ENCODE measurements at regions of chr9 and their contacts with region 1.

Region 1: DNA sequence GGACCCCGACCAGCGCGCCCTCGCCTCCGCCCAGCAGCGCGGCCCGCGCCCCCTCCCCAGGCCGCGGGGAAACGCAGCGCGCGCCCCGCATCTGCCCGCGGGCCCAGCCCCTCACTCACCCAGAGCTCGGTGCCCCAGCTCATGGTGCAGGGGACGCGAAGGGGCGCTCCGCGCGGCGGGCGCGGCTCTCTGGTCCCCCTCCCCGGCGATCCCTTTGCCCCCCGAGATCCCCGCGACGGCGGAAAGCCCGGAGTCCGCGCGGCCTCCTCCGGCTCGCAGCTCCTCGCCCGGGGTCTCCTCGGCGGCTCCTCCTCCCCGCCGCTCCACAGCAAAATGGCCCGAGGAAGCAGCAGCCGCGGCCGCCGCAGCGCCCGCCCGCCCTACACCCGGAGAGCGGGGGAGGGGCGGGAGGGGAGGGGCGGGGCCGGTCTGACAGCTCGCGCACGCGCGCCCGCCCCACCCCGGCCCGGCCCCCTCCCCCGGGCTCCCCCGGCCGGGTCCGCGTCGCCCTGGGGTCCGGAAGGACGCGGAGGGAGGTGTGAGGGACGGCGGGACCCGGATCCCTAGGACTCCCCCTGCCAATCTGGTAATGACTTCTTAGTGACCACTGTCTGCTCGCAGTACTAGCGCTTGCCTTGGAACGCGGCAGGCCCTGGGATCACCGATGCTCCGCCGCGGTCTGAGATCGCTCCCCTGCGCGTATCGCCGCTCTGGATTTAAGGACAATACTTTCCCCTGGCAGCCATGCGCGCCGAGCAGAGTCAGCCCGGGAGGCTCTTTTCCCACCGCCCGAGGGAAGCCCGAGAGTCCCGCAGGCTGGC is at the start of gene FNBP1:
- DNase-seq: peak; percentile 84
- H3K4me3 ChIP-seq: peak within 1 kb of the TSS; percentile 72 to 99 (median 88)
- H3K27ac ChIP-seq: peak within 1 kb of the TSS; percentile 92 to 100 (median 97)
- H3K4me1 ChIP-seq: peaks cover 17 to 52% (median 29%) of the 10 kb centered on the region in 4 donors
- H3K27me3 ChIP-seq: no peaks in the 10 kb centered on the region
- CTCF ChIP-seq: no peak
- EP300 ChIP-seq: no peak
- POLR2A ChIP-seq: peak; percentile 87
- total RNA-seq, gene FNBP1: 38.5 to 114 (median 62.9) TPM

Region 2: DNA sequence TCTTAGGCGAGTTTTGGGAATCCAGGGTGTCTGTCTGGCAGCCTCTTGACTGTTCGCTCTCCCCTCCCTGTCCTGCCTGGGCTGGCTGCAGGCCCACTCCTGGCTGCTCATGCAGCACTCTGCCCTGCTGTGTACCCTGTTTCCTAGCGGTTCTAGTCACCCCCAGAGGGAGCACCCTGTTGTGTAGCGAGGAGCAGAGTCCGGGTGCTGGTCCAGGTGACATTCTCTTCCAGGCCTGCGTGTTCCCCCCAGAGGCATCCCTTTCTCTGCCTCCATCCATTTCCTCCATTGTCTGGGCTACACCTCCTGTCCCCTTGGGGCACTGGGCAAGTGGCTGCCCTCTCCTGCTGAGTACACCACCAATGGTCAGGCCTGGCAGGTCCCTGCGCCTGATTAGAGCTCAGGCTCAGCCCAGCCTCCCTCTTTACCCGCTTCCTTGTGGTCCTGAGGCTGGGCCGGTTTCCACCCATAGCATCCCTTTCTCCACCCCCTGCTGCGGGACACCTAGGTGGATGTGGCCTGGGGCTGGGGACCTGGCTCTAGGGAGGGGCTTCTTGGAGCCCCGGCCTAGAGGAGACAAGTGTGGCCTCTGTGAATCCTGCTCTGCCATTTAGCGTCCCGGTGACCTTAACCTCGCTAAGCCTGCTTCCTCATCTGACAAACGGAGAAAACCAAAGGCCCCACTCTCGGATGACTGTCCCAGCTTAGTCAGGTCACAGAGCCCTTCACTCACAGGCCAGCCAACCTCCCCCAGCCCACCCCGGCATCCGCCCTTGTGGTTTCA is 949.4 kb before region 1 on chr9:
- in situ Hi-C with region 1: no loop called
- intact Hi-C with region 1: no loop called
- DNase-seq: no peak
- H3K4me3 ChIP-seq: no peak overlapping the region
- H3K27ac ChIP-seq: no peak overlapping the region
- H3K4me1 ChIP-seq: no peaks in the 10 kb centered on the region
- H3K27me3 ChIP-seq: no peaks in the 10 kb centered on the region
- CTCF ChIP-seq: no peak
- EP300 ChIP-seq: no peak
- POLR2A ChIP-seq: no peak

Region 3: GRCh38 chr9:129884220-129885017 is 158.6 kb before region 1 on chr9:
- in situ Hi-C with region 1: loop called in 2 of 4 experiments (anchors 25 kb)
- intact Hi-C with region 1: loop called (anchors 2 kb)
- DNase-seq: peak; percentile 96
- H3K4me3 ChIP-seq: peak overlapping the region in 3 of 4 donors; percentile 23 to 53 (median 25)
- H3K27ac ChIP-seq: peak overlapping the region; percentile 85 to 90 (median 87)
- H3K4me1 ChIP-seq: peaks cover 23 to 54% (median 37%) of the 10 kb centered on the region in 4 donors
- H3K27me3 ChIP-seq: no peaks in the 10 kb centered on the region
- CTCF ChIP-seq: no peak
- EP300 ChIP-seq: no peak
- POLR2A ChIP-seq: peak; percentile 63

Region 4: DNA sequence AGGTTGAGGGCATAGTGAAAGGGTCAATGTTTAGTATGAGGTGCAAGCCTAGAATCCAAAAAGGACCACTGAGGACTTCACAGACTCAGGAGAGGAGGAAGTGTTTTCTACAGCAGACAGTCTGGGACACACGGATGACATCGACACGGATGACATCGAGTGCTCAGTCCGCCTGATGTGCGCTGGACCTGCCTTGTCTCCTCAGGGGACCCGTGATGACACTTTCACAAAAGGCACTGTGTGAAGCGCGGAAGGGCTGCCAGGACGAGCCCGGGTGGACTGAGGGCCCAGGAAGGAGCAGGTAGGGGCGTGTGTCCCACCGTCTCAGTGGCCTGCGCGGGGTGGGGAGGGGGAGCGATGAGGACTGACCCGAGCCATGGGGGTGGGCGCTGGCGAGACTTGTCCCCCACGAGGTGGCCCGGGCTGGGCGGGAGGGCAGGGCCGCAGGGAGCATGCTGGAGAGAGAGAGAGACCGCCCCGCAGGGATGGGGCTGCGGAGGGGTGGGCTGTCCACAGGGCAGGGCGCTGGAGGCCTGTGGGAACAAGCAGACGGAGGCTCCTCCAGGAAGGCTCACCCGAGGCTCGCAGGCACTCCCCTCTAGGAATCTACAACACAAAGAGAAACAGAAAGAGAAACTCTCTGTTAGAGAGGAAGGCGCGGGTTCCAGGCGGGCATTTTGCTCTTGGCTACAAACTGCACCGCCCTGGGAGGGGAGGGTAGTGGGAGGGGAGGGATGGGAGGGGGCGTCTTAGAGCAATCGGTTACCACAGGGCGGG is 152.9 kb before region 1 on chr9:
- in situ Hi-C with region 1: loop called in 3 of 4 experiments (anchors 10 to 25 kb)
- intact Hi-C with region 1: loop called (anchors 2 kb)
- DNase-seq: peak; percentile 69
- H3K4me3 ChIP-seq: peak overlapping the region in 1 of 4 donors; percentile 22
- H3K27ac ChIP-seq: peak overlapping the region; percentile 85 to 90 (median 87)
- H3K4me1 ChIP-seq: peaks cover 11 to 67% (median 40%) of the 10 kb centered on the region in 4 donors
- H3K27me3 ChIP-seq: no peaks in the 10 kb centered on the region
- CTCF ChIP-seq: no peak
- EP300 ChIP-seq: no peak
- POLR2A ChIP-seq: no peak

Region 5: GRCh38 chr9:129944506-129945116 is 98.4 kb before region 1 on chr9:
- in situ Hi-C with region 1: no loop called
- intact Hi-C with region 1: loop called (anchors 5 kb)
- DNase-seq: no peak
- H3K4me3 ChIP-seq: no peak overlapping the region
- H3K27ac ChIP-seq: peak overlapping the region; percentile 72 to 84 (median 78)
- H3K4me1 ChIP-seq: peaks cover 2 to 36% (median 9%) of the 10 kb centered on the region in 4 donors
- H3K27me3 ChIP-seq: no peaks in the 10 kb centered on the region
- CTCF ChIP-seq: peak in 2 of 5 experiments; percentile 14 to 30
- EP300 ChIP-seq: no peak
- POLR2A ChIP-seq: no peak

Region 6: DNA sequence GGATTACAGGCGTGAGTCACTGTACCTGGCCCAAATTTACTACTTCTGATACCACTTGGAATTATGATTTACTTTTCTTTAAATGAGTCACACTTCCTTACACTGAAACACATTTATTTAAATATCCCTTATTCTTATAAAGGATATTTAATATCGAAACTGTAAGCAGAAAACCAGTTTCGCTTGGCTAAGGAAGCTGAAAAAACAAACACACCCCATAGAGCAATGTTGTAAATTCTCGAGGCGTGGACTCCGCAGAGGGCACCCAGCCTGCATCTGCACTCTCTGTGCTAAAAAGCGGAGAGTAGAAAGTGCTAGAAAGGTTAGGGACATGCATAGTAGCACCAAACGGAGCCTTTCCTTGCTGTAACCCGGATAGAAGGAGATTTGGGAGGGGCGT is 309.0 kb after region 1 on chr9:
- in situ Hi-C with region 1: no loop called
- intact Hi-C with region 1: no loop called
- DNase-seq: peak; percentile 49
- H3K4me3 ChIP-seq: no peak overlapping the region
- H3K27ac ChIP-seq: peak overlapping the region; percentile 21 to 70 (median 47)
- H3K4me1 ChIP-seq: peaks cover 0 to 8% (median 3%) of the 10 kb centered on the region in 4 donors
- H3K27me3 ChIP-seq: no peaks in the 10 kb centered on the region
- CTCF ChIP-seq: no peak
- EP300 ChIP-seq: no peak
- POLR2A ChIP-seq: no peak

Measured in transverse colon (tissue), 4 donors.